CD8-positive, alpha-beta T cell (primary cell): ENCODE measurements at regions of chr20 and their contacts with region 1.

Region 1: GRCh38 chr20:33666293-33667244 is at the start of gene ACTL10:
- DNase-seq: peak; percentile 53 to 90 (median 78)
- ATAC-seq: peak; percentile 47
- H3K4me3 ChIP-seq: peak within 1 kb of the TSS; percentile 73 to 86
- H3K4me3 Mint-ChIP-seq: peak within 1 kb of the TSS; percentile 96
- H3K27ac ChIP-seq: peak within 1 kb of the TSS; percentile 25 to 80
- H3K27ac Mint-ChIP-seq: peak within 1 kb of the TSS; percentile 93
- H3K4me1 ChIP-seq: peaks cover 28% of the 10 kb centered on the region
- H3K4me1 Mint-ChIP-seq: peaks cover 39% of the 10 kb centered on the region
- H3K27me3 ChIP-seq: no peaks in the 10 kb centered on the region
- H3K27me3 Mint-ChIP-seq: no peaks in the 10 kb centered on the region
- CTCF ChIP-seq: no peak
- total RNA-seq, gene ACTL10: 0.65 to 0.75 TPM

Region 2: GRCh38 chr20:33443512-33444239 is 222.9 kb before region 1 on chr20 and contains the start of gene SNTA1:
- CTCF ChIA-PET with region 1: interaction called, 13 read pairs
- POLR2A ChIA-PET with region 1: interaction called, 19 read pairs
- intact Hi-C with region 1: loop called in 1 of 2 experiments (anchors 5 kb)
- DNase-seq: peak; percentile 67 to 90 (median 87)
- ATAC-seq: peak; percentile 69
- H3K4me3 ChIP-seq: peak within 1 kb of the TSS; percentile 85 to 97
- H3K4me3 Mint-ChIP-seq: peak within 1 kb of the TSS; percentile 94
- H3K27ac ChIP-seq: peak within 1 kb of the TSS; percentile 59 to 66
- H3K27ac Mint-ChIP-seq: peak within 1 kb of the TSS; percentile 92
- H3K4me1 ChIP-seq: peaks cover 16% of the 10 kb centered on the region
- H3K4me1 Mint-ChIP-seq: peaks cover 21% of the 10 kb centered on the region
- H3K27me3 ChIP-seq: no peaks in the 10 kb centered on the region
- H3K27me3 Mint-ChIP-seq: no peaks in the 10 kb centered on the region
- CTCF ChIP-seq: no peak
- total RNA-seq, gene SNTA1: 3.9 to 5.5 TPM

Region 3: DNA sequence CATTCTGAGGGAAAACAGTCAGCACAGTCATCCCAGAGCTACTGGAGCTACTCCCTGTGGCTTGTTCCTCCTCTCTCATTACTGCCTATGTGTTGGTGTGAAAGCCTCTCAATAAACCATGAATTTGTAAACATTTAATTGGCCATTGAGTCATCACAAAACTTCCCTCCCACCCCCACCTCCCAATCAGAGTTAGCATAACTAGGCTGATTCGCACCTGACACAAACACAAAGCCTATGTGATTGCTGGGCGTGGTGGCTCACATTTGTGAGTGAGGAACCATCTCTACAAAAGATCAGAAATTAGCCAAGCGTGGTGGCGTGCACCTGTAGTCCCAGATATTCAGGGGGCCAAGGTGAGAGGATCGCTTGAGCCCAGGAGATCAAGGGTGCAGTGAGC is 205.9 kb before region 1 on chr20:
- CTCF ChIA-PET with region 1: interaction called, 57 read pairs
- POLR2A ChIA-PET with region 1: no interaction called
- intact Hi-C with region 1: loop called (anchors 1 kb)
- DNase-seq: no peak
- ATAC-seq: no peak
- H3K4me3 ChIP-seq: no peak overlapping the region
- H3K4me3 Mint-ChIP-seq: no peak overlapping the region
- H3K27ac ChIP-seq: no peak overlapping the region
- H3K27ac Mint-ChIP-seq: no peak overlapping the region
- H3K4me1 ChIP-seq: no peaks in the 10 kb centered on the region
- H3K4me1 Mint-ChIP-seq: no peaks in the 10 kb centered on the region
- H3K27me3 ChIP-seq: no peaks in the 10 kb centered on the region
- H3K27me3 Mint-ChIP-seq: no peaks in the 10 kb centered on the region
- CTCF ChIP-seq: no peak

Region 4: GRCh38 chr20:33515569-33516216 is 150.9 kb before region 1 on chr20:
- CTCF ChIA-PET with region 1: interaction called, 3 read pairs
- POLR2A ChIA-PET with region 1: no interaction called
- intact Hi-C with region 1: loop called in 1 of 2 experiments (anchors 1 kb)
- DNase-seq: peak in 1 of 9 experiments; percentile 11
- ATAC-seq: no peak
- H3K4me3 ChIP-seq: no peak overlapping the region
- H3K4me3 Mint-ChIP-seq: no peak overlapping the region
- H3K27ac ChIP-seq: no peak overlapping the region
- H3K27ac Mint-ChIP-seq: no peak overlapping the region
- H3K4me1 ChIP-seq: no peaks in the 10 kb centered on the region
- H3K4me1 Mint-ChIP-seq: peaks cover 23% of the 10 kb centered on the region
- H3K27me3 ChIP-seq: no peaks in the 10 kb centered on the region
- H3K27me3 Mint-ChIP-seq: no peaks in the 10 kb centered on the region
- CTCF ChIP-seq: peak; percentile 29

Region 5: DNA sequence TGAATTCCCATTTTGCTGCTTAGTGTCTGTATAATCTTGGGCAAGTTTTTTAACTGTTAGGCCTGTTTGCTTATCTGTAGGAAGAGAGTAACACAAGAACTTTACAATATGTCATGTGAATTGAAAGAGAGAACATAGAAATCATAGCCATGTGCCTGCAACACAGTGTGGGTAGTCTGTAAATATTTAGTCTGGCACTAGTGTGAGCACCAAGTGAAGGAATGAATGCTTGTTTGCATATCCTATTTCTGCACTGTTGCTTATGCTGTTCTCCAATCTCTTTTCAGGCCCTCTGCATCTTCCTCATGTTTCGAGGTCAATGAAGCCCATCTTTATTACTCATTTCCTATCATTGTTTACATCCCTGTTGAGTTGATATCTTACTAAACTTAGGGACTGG is 127.4 kb before region 1 on chr20:
- CTCF ChIA-PET with region 1: no interaction called
- POLR2A ChIA-PET with region 1: no interaction called
- intact Hi-C with region 1: no loop called
- DNase-seq: no peak
- ATAC-seq: no peak
- H3K4me3 ChIP-seq: no peak overlapping the region
- H3K4me3 Mint-ChIP-seq: no peak overlapping the region
- H3K27ac ChIP-seq: no peak overlapping the region
- H3K27ac Mint-ChIP-seq: no peak overlapping the region
- H3K4me1 ChIP-seq: no peaks in the 10 kb centered on the region
- H3K4me1 Mint-ChIP-seq: peaks cover 15% of the 10 kb centered on the region
- H3K27me3 ChIP-seq: no peaks in the 10 kb centered on the region
- H3K27me3 Mint-ChIP-seq: no peaks in the 10 kb centered on the region
- CTCF ChIP-seq: no peak

Region 6: DNA sequence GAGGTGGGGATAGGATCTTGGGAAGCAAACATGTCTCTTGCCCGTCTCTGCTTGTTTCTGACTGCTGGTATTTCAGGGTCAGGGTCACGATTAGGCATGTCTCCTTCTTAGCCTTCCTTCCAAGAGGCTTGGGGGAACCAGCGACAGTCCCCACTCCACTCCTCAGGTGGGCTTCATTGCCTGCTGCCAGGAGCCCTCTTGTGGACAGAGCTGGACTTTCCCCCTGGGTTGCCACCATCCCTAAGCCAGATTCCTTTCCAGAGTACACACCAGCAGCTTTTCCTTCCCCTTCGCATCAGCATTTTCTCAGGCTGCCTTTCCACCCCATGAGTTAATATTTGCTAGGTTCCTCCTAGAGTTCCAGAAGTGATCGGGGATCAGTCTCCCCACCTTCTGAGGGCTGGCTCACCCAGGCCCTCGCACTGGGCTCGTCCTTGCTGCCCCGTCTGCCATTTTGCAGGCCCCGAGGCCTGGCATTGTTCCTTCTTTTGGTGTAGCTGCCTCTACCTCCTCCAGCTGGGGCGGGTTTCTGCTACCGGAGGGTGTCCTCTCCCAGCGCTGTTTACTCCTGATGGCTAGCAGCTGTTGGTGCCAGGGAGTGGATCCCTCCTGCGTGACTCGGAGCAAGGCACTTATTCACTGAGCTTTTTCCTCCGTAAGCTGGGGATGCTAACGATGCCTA is 13.2 kb before region 1 on chr20:
- CTCF ChIA-PET with region 1: interaction called, 12 read pairs
- POLR2A ChIA-PET with region 1: interaction called, 8 read pairs
- intact Hi-C with region 1: loop called in 1 of 2 experiments (anchors 2 kb)
- DNase-seq: peak in 8 of 9 experiments; percentile 28 to 69 (median 56)
- ATAC-seq: peak; percentile 80
- H3K4me3 ChIP-seq: no peak overlapping the region
- H3K4me3 Mint-ChIP-seq: no peak overlapping the region
- H3K27ac ChIP-seq: no peak overlapping the region
- H3K27ac Mint-ChIP-seq: no peak overlapping the region
- H3K4me1 ChIP-seq: no peaks in the 10 kb centered on the region
- H3K4me1 Mint-ChIP-seq: peaks cover 14% of the 10 kb centered on the region
- H3K27me3 ChIP-seq: no peaks in the 10 kb centered on the region
- H3K27me3 Mint-ChIP-seq: no peaks in the 10 kb centered on the region
- CTCF ChIP-seq: peak; percentile 56

Region 7: DNA sequence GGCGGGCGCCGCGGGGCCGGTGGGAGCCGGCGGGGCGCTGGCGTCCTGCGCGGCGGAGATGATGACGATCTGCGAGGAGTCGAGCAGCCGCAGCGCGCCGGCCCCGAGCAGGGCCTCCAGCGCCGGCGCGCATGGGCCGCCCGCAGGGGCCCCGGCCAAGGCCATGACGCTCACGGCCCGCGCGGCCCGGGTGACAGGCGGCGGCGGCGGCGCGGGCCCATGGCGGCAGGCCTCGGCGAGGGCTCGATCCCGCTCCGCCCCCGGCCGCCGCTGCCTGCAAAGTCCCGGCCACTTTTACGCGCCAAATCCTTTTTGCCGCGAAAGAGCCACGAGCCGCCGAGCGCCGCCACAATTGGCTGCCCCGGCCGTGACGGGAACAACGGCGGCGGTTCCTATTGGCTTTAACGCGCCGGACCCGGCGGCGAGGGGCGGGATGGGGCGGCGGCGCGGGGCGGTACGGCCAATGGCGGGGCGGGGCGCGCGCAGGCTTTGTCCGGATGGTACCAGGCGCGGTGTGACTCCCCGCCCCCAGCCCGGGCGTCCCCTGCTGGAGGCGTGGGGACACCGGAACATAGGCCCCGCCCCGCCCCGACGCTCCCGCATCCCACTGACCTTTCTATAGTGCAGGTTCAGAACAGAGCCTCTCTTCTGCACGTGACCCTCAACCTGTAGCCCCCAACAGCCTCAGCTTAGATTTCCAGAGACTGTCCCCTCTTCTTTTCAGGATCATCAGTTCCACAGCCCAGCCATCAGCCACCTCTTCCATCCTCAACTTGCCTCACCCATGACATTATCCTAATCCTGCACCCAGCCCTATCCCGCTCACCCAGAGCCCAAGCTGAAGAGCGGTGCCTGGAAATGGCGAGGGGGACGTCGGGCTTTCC is 19.8 kb after region 1 on chr20 and contains the start of gene E2F1:
- CTCF ChIA-PET with region 1: interaction called, 57 read pairs
- POLR2A ChIA-PET with region 1: interaction called, 8 read pairs
- intact Hi-C with region 1: loop called (anchors 1 kb)
- DNase-seq: peak; percentile 87 to 97 (median 93)
- ATAC-seq: peak; percentile 89
- H3K4me3 ChIP-seq: peak within 1 kb of the TSS; percentile 39
- H3K4me3 Mint-ChIP-seq: peak within 1 kb of the TSS; percentile 81
- H3K27ac ChIP-seq: peak within 1 kb of the TSS; percentile 15 to 49
- H3K27ac Mint-ChIP-seq: peak within 1 kb of the TSS; percentile 79
- H3K4me1 ChIP-seq: peaks cover 35% of the 10 kb centered on the region
- H3K4me1 Mint-ChIP-seq: peaks cover 37% of the 10 kb centered on the region
- H3K27me3 ChIP-seq: no peaks in the 10 kb centered on the region
- H3K27me3 Mint-ChIP-seq: no peaks in the 10 kb centered on the region
- CTCF ChIP-seq: no peak
- total RNA-seq, gene E2F1: 1.2 to 1.3 TPM

Region 8: GRCh38 chr20:33731693-33732165 is 65.2 kb after region 1 on chr20 and contains the start of gene ZNF341:
- CTCF ChIA-PET with region 1: interaction called, 9 read pairs
- POLR2A ChIA-PET with region 1: interaction called, 15 read pairs
- intact Hi-C with region 1: loop called (anchors 2 to 5 kb)
- DNase-seq: peak; percentile 81 to 95 (median 89)
- ATAC-seq: peak; percentile 85
- H3K4me3 ChIP-seq: peak within 1 kb of the TSS; percentile 67 to 79
- H3K4me3 Mint-ChIP-seq: peak within 1 kb of the TSS; percentile 88
- H3K27ac ChIP-seq: peak within 1 kb of the TSS; percentile 60 to 81
- H3K27ac Mint-ChIP-seq: peak within 1 kb of the TSS; percentile 92
- H3K4me1 ChIP-seq: peaks cover 12% of the 10 kb centered on the region
- H3K4me1 Mint-ChIP-seq: peaks cover 20% of the 10 kb centered on the region
- H3K27me3 ChIP-seq: no peaks in the 10 kb centered on the region
- H3K27me3 Mint-ChIP-seq: no peaks in the 10 kb centered on the region
- CTCF ChIP-seq: peak; percentile 67
- total RNA-seq, gene ZNF341: 2.4 to 2.9 TPM

Region 9: DNA sequence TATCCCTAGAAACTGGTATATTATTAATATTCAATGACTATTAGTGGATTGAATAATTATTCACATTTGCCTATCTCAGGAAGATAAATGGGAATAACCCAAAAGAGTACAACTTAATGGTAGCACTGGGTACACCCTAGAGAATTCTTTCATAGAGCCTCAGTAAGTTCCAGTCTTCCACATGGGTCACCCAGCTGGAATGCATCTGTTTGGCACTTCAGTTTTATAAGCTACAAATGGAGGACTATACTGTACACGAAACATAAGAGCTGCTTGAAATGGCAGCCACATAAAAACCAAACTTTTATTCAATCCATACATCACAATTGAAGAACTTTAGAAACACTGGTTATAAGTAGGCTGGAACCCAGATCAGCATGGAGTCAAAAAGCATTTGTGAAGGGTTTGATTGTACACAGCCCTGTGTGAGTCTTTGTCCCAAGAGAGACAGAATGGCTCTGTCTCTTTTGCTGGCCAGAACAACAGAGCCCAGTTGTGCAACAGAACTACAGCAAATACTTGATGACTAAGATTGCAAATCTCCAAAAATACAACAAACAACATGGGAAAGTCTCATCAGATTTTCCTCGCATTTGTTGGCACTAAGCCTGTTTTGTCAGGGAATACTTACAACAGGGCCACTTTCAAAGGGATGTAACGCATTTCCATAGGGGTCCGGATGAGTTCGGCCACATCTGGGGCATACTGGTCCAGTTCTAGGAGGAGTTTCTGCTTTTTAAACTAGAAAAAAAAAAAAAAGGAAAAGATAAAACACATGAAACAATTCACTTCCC is 970.9 kb after region 1 on chr20:
- CTCF ChIA-PET with region 1: no interaction called
- POLR2A ChIA-PET with region 1: no interaction called
- intact Hi-C with region 1: no loop called
- DNase-seq: no peak
- ATAC-seq: no peak
- H3K4me3 ChIP-seq: no peak overlapping the region
- H3K4me3 Mint-ChIP-seq: no peak overlapping the region
- H3K27ac ChIP-seq: no peak overlapping the region
- H3K27ac Mint-ChIP-seq: no peak overlapping the region
- H3K4me1 ChIP-seq: no peaks in the 10 kb centered on the region
- H3K4me1 Mint-ChIP-seq: no peaks in the 10 kb centered on the region
- H3K27me3 ChIP-seq: no peaks in the 10 kb centered on the region
- H3K27me3 Mint-ChIP-seq: no peaks in the 10 kb centered on the region
- CTCF ChIP-seq: no peak